ENCODE measurements at regions of chr16 and their contacts with region 1.

Region 1: GRCh38 chr16:27313422-27314160 is at the start of gene IL4R:
- DNase-seq: peak; percentile 81
- H3K4me3 ChIP-seq: peak within 1 kb of the TSS; percentile 33 to 94 (median 88)
- H3K27ac ChIP-seq: peak within 1 kb of the TSS; percentile 93 to 99 (median 99)
- H3K4me1 ChIP-seq: peaks cover 19 to 53% (median 48%) of the 10 kb centered on the region in 4 donors
- H3K27me3 ChIP-seq: no peaks in the 10 kb centered on the region
- CTCF ChIP-seq: no peak
- EP300 ChIP-seq: no peak
- POLR2A ChIP-seq: peak; percentile 84
- total RNA-seq, gene IL4R: 106 to 235 (median 156) TPM

Region 2: DNA sequence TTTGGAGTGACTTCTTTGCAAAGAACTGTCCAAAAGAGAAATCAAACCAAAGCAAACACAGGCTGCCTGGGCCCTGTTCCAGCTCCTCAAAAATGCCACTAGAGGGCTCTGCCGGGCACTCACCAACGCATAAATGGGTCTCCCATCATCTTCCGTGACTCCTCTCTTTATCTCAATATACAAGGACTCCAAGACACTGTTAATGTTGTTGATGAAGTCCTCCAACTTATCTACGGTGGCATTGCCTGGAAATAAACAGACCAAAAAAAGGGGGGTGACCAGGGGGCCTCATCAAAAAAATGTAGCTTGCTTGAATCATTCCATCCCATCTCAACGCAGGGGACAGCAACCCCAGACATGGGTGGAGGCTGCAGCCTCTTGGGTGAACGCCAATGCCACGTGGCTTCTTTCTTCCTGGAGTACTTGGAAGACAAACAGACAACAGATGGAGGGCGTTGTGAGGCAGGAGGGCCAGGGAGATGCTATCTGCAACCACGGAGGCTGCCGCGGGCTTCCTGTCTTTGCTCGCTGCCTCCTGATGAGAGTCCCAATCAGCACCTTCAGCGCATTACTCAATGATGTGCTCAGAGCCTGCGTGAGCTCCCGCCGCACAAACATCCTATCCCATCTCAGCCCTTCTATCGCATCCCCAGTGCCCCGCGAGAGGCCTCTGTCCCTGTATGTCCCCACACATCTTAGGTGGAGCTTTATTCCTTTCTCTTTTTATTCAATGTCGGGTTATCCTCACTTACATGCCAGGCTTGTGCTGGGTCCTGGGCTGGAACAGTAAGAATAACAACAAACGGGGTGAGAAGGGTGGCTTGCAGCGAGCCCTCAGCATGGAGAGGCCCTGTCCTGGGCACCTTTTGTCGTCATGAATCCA is 78.3 kb before region 1 on chr16:
- in situ Hi-C with region 1: loop called in 1 of 4 experiments (anchors 10 kb)
- intact Hi-C with region 1: loop called (anchors 5 kb)
- DNase-seq: peak; percentile 92
- H3K4me3 ChIP-seq: no peak overlapping the region
- H3K27ac ChIP-seq: peak overlapping the region; percentile 77 to 90 (median 82)
- H3K4me1 ChIP-seq: peaks cover 32 to 90% (median 58%) of the 10 kb centered on the region in 4 donors
- H3K27me3 ChIP-seq: no peaks in the 10 kb centered on the region
- CTCF ChIP-seq: peak; percentile 79 to 86 (median 82)
- EP300 ChIP-seq: no peak
- POLR2A ChIP-seq: peak; percentile 41

Region 3: DNA sequence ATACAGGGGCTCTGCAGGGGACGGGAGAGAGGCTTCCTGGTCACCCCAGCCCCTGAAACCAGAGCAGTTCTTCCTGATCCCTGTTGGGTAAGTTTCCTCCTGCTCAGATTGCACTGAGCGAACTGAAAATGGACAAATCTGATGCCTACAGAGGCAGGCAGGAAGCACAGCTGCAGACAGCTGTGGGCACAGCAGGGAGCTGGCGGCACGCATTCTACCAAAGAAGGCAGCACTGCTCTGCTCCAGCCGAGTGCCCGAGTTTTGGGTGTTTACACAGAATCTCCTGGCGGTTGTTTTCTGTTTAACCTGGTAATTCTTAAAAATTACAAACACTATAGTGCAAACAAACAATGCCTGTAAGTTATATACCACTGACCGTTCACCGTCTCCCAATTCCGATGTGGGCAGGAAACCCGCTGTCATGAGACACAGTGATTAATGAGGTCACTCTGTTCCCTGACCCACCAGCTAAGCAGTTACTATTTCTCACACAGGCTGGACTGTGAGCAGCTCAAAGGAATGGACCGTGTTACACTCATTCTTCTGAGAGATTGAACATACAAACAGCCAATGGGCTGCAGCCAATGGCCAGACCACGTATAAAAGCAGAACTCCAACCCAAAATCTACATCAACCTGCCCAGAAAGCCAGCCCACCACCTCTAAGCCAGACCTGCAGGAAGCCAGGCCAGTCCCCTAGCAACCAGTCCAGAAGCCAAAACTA is 70.6 kb before region 1 on chr16:
- in situ Hi-C with region 1: loop called in 1 of 4 experiments (anchors 10 kb)
- intact Hi-C with region 1: loop called (anchors 5 kb)
- DNase-seq: no peak
- H3K4me3 ChIP-seq: peak overlapping the region in 2 of 4 donors; percentile 9 to 13
- H3K27ac ChIP-seq: peak overlapping the region; percentile 77 to 90 (median 82)
- H3K4me1 ChIP-seq: peaks cover 39 to 87% (median 49%) of the 10 kb centered on the region in 4 donors
- H3K27me3 ChIP-seq: no peaks in the 10 kb centered on the region
- CTCF ChIP-seq: no peak
- EP300 ChIP-seq: no peak
- POLR2A ChIP-seq: peak; percentile 18

Region 4: DNA sequence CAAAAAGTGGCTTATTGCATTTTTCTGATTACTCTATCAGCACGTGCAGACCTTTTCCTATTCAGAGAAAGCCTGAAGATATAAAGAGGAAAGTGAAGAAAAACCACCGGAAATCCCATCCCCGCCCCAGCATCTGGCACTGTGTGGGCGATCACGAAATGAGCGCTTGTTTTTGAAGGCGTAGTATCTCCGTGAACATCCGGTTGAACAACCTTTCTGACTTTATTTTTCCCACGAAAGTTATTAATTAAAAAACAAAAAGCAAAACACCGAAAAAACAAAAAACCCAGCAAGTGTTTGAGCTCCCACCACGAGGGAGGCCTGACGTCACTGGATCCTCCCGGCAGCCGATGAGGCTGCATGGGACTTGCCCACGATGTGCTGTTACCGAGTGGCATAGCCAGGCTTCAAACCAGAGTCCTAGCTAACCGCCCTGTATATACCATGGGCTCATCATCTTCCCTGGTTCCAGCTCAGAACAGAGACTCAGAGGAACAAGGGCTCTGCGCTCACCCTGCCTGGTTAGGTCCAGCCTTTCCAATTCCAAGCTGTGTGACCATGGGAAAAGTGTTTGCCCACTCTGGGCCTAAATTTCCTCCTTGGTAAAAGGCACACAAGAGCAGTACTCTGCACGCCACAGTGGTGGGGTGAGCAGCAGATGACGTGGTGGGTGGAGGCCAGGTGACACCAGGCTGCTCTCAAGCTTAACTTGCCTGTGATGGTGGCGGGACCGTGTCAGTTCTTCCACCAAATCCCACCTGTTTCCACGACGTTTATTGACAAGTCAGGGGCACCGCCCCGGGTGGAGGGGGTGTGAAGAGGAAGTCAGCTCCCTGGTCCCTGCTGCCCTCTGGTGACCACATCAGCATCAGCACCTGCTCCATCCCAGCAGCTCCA is 54.1 kb after region 1 on chr16:
- in situ Hi-C with region 1: no loop called
- intact Hi-C with region 1: loop called (anchors 10 kb)
- DNase-seq: peak; percentile 88
- H3K4me3 ChIP-seq: peak overlapping the region in 1 of 4 donors; percentile 15
- H3K27ac ChIP-seq: peak overlapping the region; percentile 53 to 76 (median 61)
- H3K4me1 ChIP-seq: peaks cover 9 to 35% (median 27%) of the 10 kb centered on the region in 4 donors
- H3K27me3 ChIP-seq: no peaks in the 10 kb centered on the region
- CTCF ChIP-seq: peak; percentile 79 to 89 (median 82)
- EP300 ChIP-seq: no peak
- POLR2A ChIP-seq: no peak